ENCODE measurements at regions of chr3 and their contacts with region 1.

Region 1: DNA sequence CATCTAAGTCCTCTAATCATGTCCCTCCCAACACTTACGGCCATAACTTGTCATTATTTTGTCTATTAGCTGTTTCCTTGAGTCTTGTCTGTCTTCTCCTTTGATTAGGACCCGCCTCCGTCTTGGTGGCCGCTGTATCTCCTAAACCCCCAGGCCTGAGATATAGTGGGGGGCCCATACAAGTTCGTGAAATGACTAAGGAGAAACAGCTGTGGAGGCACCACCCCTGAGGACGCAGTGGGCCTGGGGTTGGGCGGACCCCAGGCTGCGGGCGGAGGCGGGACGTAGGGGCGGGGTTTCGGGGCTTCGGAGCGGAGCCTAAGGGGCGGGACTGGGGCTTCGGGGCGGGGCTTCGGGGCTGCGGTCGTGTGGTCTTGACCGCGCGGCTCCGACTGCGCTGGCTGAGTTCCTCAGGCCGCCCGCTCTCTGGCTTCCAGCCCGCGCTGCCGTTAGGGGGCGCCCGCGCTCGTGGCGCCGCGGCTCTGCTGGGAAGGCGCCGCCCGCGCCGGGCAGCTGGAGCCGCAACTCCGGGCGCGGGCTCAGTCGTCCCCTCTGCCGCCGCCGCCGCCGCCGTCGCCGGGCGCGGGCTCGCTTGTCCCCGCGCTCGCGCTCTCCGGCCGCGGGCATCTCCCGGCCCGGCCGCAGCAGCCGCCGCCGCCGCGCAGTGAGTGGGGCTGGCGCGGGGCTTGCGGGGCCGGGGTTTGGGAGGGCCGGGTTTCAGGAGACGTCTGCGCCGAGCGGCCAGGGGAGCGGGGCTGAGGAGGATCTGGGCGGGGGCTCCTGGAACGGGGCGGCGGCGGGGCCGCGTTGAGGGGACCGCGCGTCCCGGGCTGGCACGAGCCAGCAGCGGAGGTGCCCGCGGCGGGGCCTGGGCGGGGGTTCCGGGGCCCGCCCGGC is at the start of gene KCTD6:
- DNase-seq: peak; percentile 95
- H3K4me3 ChIP-seq: peak within 1 kb of the TSS; percentile 76 to 99 (median 89)
- H3K27ac ChIP-seq: peak within 1 kb of the TSS; percentile 86 to 90 (median 87)
- H3K4me1 ChIP-seq: peaks cover 16 to 42% (median 26%) of the 10 kb centered on the region in 4 donors
- H3K27me3 ChIP-seq: no peaks in the 10 kb centered on the region
- CTCF ChIP-seq: peak in 4 of 5 experiments; percentile 60 to 76 (median 63)
- EP300 ChIP-seq: no peak
- POLR2A ChIP-seq: no peak
- total RNA-seq, gene KCTD6: 3.0 to 15.7 (median 11.2) TPM

Region 2: DNA sequence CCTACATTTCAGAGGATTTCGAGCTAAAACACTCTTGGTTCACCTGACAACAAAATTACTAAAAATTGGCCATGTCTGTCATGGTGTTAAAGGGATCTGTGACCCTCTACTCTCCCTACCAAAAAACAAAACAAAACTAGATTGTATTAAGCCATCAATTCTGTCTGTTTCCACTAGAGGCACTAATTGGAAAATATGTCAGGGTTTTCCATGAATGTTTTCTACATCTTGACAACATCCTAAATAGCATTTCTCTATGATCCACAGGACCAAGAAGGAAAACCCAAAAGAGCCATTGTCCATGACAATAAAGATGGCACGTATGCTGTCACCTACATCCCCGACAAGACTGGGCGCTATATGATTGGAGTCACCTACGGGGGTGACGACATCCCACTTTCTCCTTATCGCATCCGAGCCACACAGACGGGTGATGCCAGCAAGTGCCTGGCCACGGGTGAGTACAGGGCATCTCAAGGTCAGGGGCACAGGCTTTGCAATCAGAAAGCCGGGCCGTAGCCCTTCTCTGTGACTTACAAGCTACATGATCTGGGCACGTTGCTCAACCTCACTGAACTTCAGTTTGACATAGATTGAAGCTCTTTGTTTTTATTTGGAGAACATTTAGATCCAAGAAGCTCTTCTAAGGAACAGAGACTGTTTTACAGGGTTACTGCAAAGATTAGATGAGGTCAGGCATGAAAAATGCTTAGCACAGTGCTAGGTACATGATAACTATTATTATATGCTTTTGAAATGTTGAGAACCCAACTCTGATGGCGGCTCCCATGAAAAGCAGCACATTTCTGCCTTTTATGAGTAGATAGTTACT is 355.8 kb before region 1 on chr3:
- in situ Hi-C with region 1: no loop called
- intact Hi-C with region 1: no loop called
- DNase-seq: no peak
- H3K4me3 ChIP-seq: no peak overlapping the region
- H3K27ac ChIP-seq: peak overlapping the region in 3 of 4 donors; percentile 32 to 60 (median 39)
- H3K4me1 ChIP-seq: no peaks in the 10 kb centered on the region
- H3K27me3 ChIP-seq: no peaks in the 10 kb centered on the region
- CTCF ChIP-seq: peak in 4 of 5 experiments; percentile 22 to 34 (median 27)
- EP300 ChIP-seq: no peak
- POLR2A ChIP-seq: no peak

Region 3: GRCh38 chr3:58332575-58333188 is 159.1 kb before region 1 on chr3 and contains the start of gene PXK:
- in situ Hi-C with region 1: loop called in 1 of 4 experiments (anchors 10 kb)
- intact Hi-C with region 1: loop called (anchors 2 kb)
- DNase-seq: peak; percentile 86
- H3K4me3 ChIP-seq: peak within 1 kb of the TSS; percentile 72 to 96 (median 94)
- H3K27ac ChIP-seq: peak within 1 kb of the TSS; percentile 77 to 86 (median 83)
- H3K4me1 ChIP-seq: peaks cover 5 to 36% (median 20%) of the 10 kb centered on the region in 4 donors
- H3K27me3 ChIP-seq: no peaks in the 10 kb centered on the region
- CTCF ChIP-seq: peak in 1 of 5 experiments; percentile 18
- EP300 ChIP-seq: no peak
- POLR2A ChIP-seq: no peak
- total RNA-seq, gene PXK: 7.6 to 29.5 (median 16.6) TPM

Region 4: GRCh38 chr3:58398669-58399333 is 93.0 kb before region 1 on chr3:
- in situ Hi-C with region 1: no loop called
- intact Hi-C with region 1: loop called (anchors 1 kb)
- DNase-seq: no peak
- H3K4me3 ChIP-seq: no peak overlapping the region
- H3K27ac ChIP-seq: no peak overlapping the region
- H3K4me1 ChIP-seq: peaks cover 0 to 4% (median 1%) of the 10 kb centered on the region in 4 donors
- H3K27me3 ChIP-seq: no peaks in the 10 kb centered on the region
- CTCF ChIP-seq: no peak
- EP300 ChIP-seq: no peak
- POLR2A ChIP-seq: no peak

Measured in transverse colon (tissue), 4 donors.